ENCODE measurements at regions of chr1 and their contacts with region 1.

Region 1: GRCh38 chr1:47449822-47450552 is 12.1 kb downstream of the FOXD2 start:
- DNase-seq: no peak
- ATAC-seq: peak; percentile 93
- H3K4me3 ChIP-seq: no peak overlapping the region
- H3K27ac ChIP-seq: no peak overlapping the region
- H3K4me1 ChIP-seq: no peaks in the 10 kb centered on the region
- H3K27me3 ChIP-seq: peaks cover 14% of the 10 kb centered on the region; the same call in 1 of the 2 replicates
- CTCF ChIP-seq: peak; percentile 62 to 86 (median 63)
- POLR2A ChIP-seq: no peak
- RAD21 ChIP-seq: peak; percentile 68

Region 2: GRCh38 chr1:47624531-47624930 is 174.5 kb after region 1 on chr1:
- CTCF ChIA-PET with region 1: no interaction called
- POLR2A ChIA-PET with region 1: no interaction called
- RAD21 ChIA-PET with region 1: no interaction called
- intact Hi-C with region 1: loop called (anchors 1 kb)
- DNase-seq: peak; percentile 32
- ATAC-seq: peak; percentile 94
- H3K4me3 ChIP-seq: no peak overlapping the region
- H3K27ac ChIP-seq: no peak overlapping the region
- H3K4me1 ChIP-seq: no peaks in the 10 kb centered on the region
- H3K27me3 ChIP-seq: no peaks in the 10 kb centered on the region
- CTCF ChIP-seq: peak; percentile 58 to 98 (median 66)
- POLR2A ChIP-seq: no peak
- RAD21 ChIP-seq: peak; percentile 81